ENCODE measurements at regions of chr6 and their contacts with region 1.

Region 1: GRCh38 chr6:113994918-113995342 is 24.0 kb upstream of the HDAC2 start:
- DNase-seq: peak in 5 of 9 donors; percentile 27 to 47 (median 41)
- ATAC-seq: peak; percentile 87
- H3K4me3 ChIP-seq: no peak overlapping the region
- H3K4me3 Mint-ChIP-seq: no peak overlapping the region
- H3K27ac ChIP-seq: no peak overlapping the region
- H3K27ac Mint-ChIP-seq: no peak overlapping the region
- H3K4me1 ChIP-seq: no peaks in the 10 kb centered on the region
- H3K4me1 Mint-ChIP-seq: peaks cover 0 to 6% (median 3%) of the 10 kb centered on the region in 7 donors
- H3K27me3 ChIP-seq: no peaks in the 10 kb centered on the region
- H3K27me3 Mint-ChIP-seq: peaks cover 0 to 34% (median 9%) of the 10 kb centered on the region in 5 donors

Region 2: GRCh38 chr6:114007451-114007953 is 12.6 kb after region 1 on chr6:
- CTCF ChIA-PET with region 1: no interaction called
- POLR2A ChIA-PET with region 1: no interaction called
- intact Hi-C with region 1: no loop called
- DNase-seq: peak in 4 of 9 donors; percentile 19 to 34 (median 27)
- ATAC-seq: peak; percentile 67
- H3K4me3 ChIP-seq: no peak overlapping the region
- H3K4me3 Mint-ChIP-seq: peak overlapping the region in 1 of 10 donors; percentile 59
- H3K27ac ChIP-seq: no peak overlapping the region
- H3K27ac Mint-ChIP-seq: peak overlapping the region in 1 of 9 donors; percentile 21
- H3K4me1 ChIP-seq: peaks cover 3 to 5% of the 10 kb centered on the region in 2 donors
- H3K4me1 Mint-ChIP-seq: peaks cover 7 to 26% (median 20%) of the 10 kb centered on the region in 7 donors
- H3K27me3 ChIP-seq: no peaks in the 10 kb centered on the region
- H3K27me3 Mint-ChIP-seq: peaks cover 6 to 29% (median 17%) of the 10 kb centered on the region in 5 donors

Region 3: GRCh38 chr6:114108119-114109002 is 113.4 kb after region 1 on chr6:
- CTCF ChIA-PET with region 1: interaction called, 3 read pairs
- POLR2A ChIA-PET with region 1: no interaction called
- intact Hi-C with region 1: loop called (anchors 1 kb)
- DNase-seq: peak in 1 of 9 donors; percentile 21
- ATAC-seq: no peak
- H3K4me3 ChIP-seq: no peak overlapping the region
- H3K4me3 Mint-ChIP-seq: no peak overlapping the region
- H3K27ac ChIP-seq: no peak overlapping the region
- H3K27ac Mint-ChIP-seq: no peak overlapping the region
- H3K4me1 ChIP-seq: no peaks in the 10 kb centered on the region
- H3K4me1 Mint-ChIP-seq: no peaks in the 10 kb centered on the region
- H3K27me3 ChIP-seq: no peaks in the 10 kb centered on the region
- H3K27me3 Mint-ChIP-seq: peaks cover 9 to 26% (median 23%) of the 10 kb centered on the region in 5 donors

Region 4: DNA sequence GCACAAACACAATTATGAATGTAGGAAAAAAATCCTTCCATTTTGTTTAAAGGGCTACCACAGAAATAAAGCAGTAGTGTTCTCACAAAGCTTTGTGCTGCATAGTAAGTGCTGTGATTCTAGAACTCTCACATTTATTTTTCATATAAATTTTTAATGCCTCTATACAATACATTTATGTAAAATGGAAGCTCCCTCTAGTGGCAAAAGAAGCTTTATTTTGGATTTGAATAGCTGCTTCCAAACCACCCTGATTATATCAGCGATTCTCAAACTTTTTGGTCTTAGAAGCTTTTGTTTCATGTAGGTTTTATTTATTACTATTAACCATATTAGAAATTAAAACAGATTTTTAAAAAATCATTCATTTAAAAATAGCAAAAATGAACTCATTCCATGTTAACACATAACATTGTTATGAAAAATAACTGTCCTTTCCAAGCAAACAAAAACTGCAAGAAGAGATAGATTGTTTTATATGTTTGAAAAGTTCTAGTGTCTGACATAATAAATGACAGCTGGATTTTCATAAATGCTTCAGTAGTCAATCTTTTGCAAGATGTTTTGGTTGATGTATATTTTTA is 309.5 kb after region 1 on chr6:
- CTCF ChIA-PET with region 1: interaction called, 4 read pairs
- POLR2A ChIA-PET with region 1: no interaction called
- intact Hi-C with region 1: loop called in 1 of 2 experiments (anchors 1 kb)
- DNase-seq: no peak
- ATAC-seq: no peak
- H3K4me3 ChIP-seq: no peak overlapping the region
- H3K4me3 Mint-ChIP-seq: no peak overlapping the region
- H3K27ac ChIP-seq: no peak overlapping the region
- H3K27ac Mint-ChIP-seq: no peak overlapping the region
- H3K4me1 ChIP-seq: no peaks in the 10 kb centered on the region
- H3K4me1 Mint-ChIP-seq: no peaks in the 10 kb centered on the region
- H3K27me3 ChIP-seq: no peaks in the 10 kb centered on the region
- H3K27me3 Mint-ChIP-seq: no peaks in the 10 kb centered on the region

Region 5: DNA sequence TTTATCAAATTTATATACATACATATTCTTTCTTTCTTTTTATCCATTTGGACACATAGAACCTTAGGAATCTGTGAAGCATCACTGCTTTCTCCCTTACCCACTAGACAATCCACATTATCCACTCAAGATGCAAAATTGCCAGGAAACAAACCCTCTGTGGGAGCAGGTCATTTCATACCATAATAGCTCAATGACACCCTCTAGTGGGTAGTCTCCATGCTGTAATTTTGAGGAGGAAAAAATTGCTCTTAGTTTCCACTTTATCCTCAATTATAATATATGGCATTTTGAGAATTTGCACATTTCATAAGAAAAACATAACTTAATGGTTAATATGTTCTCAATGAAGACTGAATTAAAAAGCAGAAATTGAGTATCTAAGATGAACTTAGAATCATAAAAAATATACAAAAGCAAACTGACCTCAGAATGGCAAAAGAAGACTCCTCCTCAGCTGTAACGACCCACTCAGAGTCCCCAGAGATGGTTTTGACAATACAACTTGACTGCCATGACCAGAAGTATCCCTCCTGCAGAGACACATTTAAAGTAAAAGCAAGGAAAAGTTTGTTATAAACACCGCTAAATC is 1901.7 kb after region 1 on chr6:
- CTCF ChIA-PET with region 1: no interaction called
- POLR2A ChIA-PET with region 1: no interaction called
- intact Hi-C with region 1: loop called in 1 of 2 experiments (anchors 10 kb)
- DNase-seq: no peak
- ATAC-seq: no peak
- H3K4me3 ChIP-seq: no peak overlapping the region
- H3K4me3 Mint-ChIP-seq: no peak overlapping the region
- H3K27ac ChIP-seq: no peak overlapping the region
- H3K27ac Mint-ChIP-seq: no peak overlapping the region
- H3K4me1 ChIP-seq: no peaks in the 10 kb centered on the region
- H3K4me1 Mint-ChIP-seq: peaks cover 0 to 1% (median 0%) of the 10 kb centered on the region in 7 donors
- H3K27me3 ChIP-seq: no peaks in the 10 kb centered on the region
- H3K27me3 Mint-ChIP-seq: peaks cover 0 to 9% (median 0%) of the 10 kb centered on the region in 5 donors

Measured in naive thymus-derived CD4-positive, alpha-beta T cell (primary cell).